ENCODE measurements at regions of chr1 and their contacts with region 1.

Region 1: GRCh38 chr1:35641233-35641866 is at the start of gene PSMB2:
- DNase-seq: peak; percentile 96
- ATAC-seq: peak; percentile 91
- H3K4me3 ChIP-seq: peak within 1 kb of the TSS; percentile 84 to 97 (median 92)
- H3K4me3 Mint-ChIP-seq: peak within 1 kb of the TSS; percentile 100
- H3K27ac ChIP-seq: peak within 1 kb of the TSS; percentile 75 to 76
- H3K27ac Mint-ChIP-seq: peak within 1 kb of the TSS; percentile 98
- H3K4me1 ChIP-seq: peaks cover 14 to 18% of the 10 kb centered on the region in 2 donors
- H3K4me1 Mint-ChIP-seq: peaks cover 39% of the 10 kb centered on the region
- H3K27me3 ChIP-seq: peaks cover 0 to 21% (median 5%) of the 10 kb centered on the region in 4 experiments
- H3K27me3 Mint-ChIP-seq: peaks cover 23% of the 10 kb centered on the region
- CTCF ChIP-seq: no peak
- total RNA-seq, gene PSMB2: 24.8 and 26.2 TPM in 2 replicates

Region 2: GRCh38 chr1:35539073-35539823 is 102.1 kb before region 1 on chr1:
- CTCF ChIA-PET with region 1: no interaction called
- POLR2A ChIA-PET with region 1: no interaction called
- intact Hi-C with region 1: no loop called
- DNase-seq: peak; percentile 15
- ATAC-seq: no peak
- H3K4me3 ChIP-seq: no peak overlapping the region
- H3K4me3 Mint-ChIP-seq: peak overlapping the region; percentile 66
- H3K27ac ChIP-seq: peak overlapping the region; percentile 35 to 66
- H3K27ac Mint-ChIP-seq: peak overlapping the region; percentile 78
- H3K4me1 ChIP-seq: peaks cover 14 to 18% of the 10 kb centered on the region in 2 donors
- H3K4me1 Mint-ChIP-seq: peaks cover 31% of the 10 kb centered on the region
- H3K27me3 ChIP-seq: no peaks in the 10 kb centered on the region
- H3K27me3 Mint-ChIP-seq: no peaks in the 10 kb centered on the region
- CTCF ChIP-seq: no peak

Region 3: DNA sequence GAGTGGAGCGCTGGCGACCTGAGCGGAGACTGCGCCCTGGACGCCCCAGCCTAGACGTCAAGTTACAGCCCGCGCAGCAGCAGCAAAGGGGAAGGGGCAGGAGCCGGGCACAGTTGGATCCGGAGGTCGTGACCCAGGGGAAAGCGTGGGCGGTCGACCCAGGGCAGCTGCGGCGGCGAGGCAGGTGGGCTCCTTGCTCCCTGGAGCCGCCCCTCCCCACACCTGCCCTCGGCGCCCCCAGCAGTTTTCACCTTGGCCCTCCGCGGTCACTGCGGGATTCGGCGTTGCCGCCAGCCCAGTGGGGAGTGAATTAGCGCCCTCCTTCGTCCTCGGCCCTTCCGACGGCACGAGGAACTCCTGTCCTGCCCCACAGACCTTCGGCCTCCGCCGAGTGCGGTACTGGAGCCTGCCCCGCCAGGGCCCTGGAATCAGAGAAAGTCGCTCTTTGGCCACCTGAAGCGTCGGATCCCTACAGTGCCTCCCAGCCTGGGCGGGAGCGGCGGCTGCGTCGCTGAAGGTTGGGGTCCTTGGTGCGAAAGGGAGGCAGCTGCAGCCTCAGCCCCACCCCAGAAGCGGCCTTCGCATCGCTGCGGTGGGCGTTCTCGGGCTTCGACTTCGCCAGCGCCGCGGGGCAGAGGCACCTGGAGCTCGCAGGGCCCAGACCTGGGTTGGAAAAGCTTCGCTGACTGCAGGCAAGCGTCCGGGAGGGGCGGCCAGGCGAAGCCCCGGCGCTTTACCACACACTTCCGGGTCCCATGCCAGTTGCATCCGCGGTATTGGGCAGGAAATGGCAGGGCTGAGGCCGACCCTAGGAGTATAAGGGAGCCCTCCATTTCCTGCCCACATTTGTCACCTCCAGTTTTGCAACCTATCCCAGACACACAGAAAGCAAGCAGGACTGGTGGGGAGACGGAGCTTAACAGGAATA is 64.0 kb before region 1 on chr1:
- CTCF ChIA-PET with region 1: interaction called, 3 read pairs
- POLR2A ChIA-PET with region 1: interaction called, 13 read pairs
- intact Hi-C with region 1: loop called (anchors 5 kb)
- DNase-seq: peak; percentile 81
- ATAC-seq: peak; percentile 85
- H3K4me3 ChIP-seq: peak overlapping the region; percentile 60 to 75 (median 71)
- H3K4me3 Mint-ChIP-seq: peak overlapping the region; percentile 91
- H3K27ac ChIP-seq: peak overlapping the region; percentile 43 to 62
- H3K27ac Mint-ChIP-seq: peak overlapping the region; percentile 90
- H3K4me1 ChIP-seq: peaks cover 21 to 39% of the 10 kb centered on the region in 2 donors
- H3K4me1 Mint-ChIP-seq: peaks cover 38% of the 10 kb centered on the region
- H3K27me3 ChIP-seq: peaks cover 0 to 21% (median 6%) of the 10 kb centered on the region in 4 experiments
- H3K27me3 Mint-ChIP-seq: peaks cover 14% of the 10 kb centered on the region
- CTCF ChIP-seq: no peak

Region 4: DNA sequence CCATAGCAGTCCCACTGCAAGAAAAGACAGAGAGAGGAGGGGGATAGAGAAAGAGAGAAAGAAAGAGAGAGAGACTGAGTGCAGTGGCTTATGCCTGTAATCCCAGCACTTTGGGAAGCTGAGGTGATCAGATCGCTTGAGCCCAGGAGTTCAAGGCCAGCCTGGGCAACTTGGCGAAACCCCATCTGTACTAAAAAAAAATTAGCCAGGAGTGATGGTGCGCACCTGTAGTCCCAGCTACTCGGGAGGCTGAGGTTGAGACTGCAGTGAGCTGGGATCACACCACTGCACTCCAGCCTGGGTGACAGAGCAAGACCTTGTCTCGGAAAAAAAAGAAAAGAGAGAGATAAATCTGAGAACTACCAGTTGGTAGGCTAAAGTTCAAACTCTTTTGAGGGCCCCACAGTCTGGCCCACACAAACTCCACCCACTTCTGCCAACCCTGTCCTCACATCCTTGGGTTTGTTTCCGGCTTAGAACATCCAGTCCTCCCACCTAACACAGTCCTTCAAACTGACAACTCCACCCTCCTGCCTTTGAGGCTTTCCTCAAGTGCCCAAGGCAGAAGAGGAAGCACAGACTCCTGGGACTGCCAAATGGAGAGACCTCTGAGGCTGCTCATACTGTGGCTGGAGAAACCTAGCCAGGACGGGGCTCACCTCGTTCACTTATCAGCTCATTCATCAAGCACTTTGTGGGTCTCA is 48.2 kb before region 1 on chr1:
- CTCF ChIA-PET with region 1: no interaction called
- POLR2A ChIA-PET with region 1: interaction called, 12 read pairs
- intact Hi-C with region 1: no loop called
- DNase-seq: no peak
- ATAC-seq: no peak
- H3K4me3 ChIP-seq: no peak overlapping the region
- H3K4me3 Mint-ChIP-seq: no peak overlapping the region
- H3K27ac ChIP-seq: no peak overlapping the region
- H3K27ac Mint-ChIP-seq: no peak overlapping the region
- H3K4me1 ChIP-seq: no peaks in the 10 kb centered on the region
- H3K4me1 Mint-ChIP-seq: no peaks in the 10 kb centered on the region
- H3K27me3 ChIP-seq: no peaks in the 10 kb centered on the region
- H3K27me3 Mint-ChIP-seq: no peaks in the 10 kb centered on the region
- CTCF ChIP-seq: no peak

Region 5: DNA sequence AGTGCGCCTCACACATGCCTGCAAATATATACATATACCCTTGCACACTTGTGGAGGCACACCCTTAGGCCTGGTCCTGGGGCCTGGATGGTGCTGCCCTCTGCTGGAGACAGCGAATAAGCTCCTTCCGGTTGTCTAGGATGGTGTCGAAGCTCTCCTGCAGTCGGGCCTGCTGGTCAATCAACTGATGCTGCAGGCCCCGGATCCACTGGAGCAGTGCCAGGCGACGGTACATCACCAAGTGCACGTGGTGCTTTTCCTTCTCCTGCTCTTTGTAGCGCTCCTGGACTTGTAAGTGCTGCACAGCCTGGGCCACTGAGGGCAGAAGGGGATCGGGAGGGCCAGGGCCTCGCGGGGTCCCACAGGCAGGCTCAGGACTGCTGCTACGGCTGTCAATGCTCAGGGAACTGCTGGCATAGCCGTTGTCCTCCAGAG is 74.2 kb after region 1 on chr1:
- CTCF ChIA-PET with region 1: interaction called, 6 read pairs
- POLR2A ChIA-PET with region 1: no interaction called
- intact Hi-C with region 1: loop called (anchors 5 kb)
- DNase-seq: peak; percentile 79
- ATAC-seq: peak; percentile 59
- H3K4me3 ChIP-seq: no peak overlapping the region
- H3K4me3 Mint-ChIP-seq: peak overlapping the region; percentile 51
- H3K27ac ChIP-seq: no peak overlapping the region
- H3K27ac Mint-ChIP-seq: peak overlapping the region; percentile 54
- H3K4me1 ChIP-seq: peaks cover 10 to 20% of the 10 kb centered on the region in 2 donors
- H3K4me1 Mint-ChIP-seq: peaks cover 29% of the 10 kb centered on the region
- H3K27me3 ChIP-seq: peaks cover 0 to 3% (median 0%) of the 10 kb centered on the region in 4 experiments
- H3K27me3 Mint-ChIP-seq: no peaks in the 10 kb centered on the region
- CTCF ChIP-seq: peak; percentile 98

Region 6: GRCh38 chr1:36397378-36398230 is 756.3 kb after region 1 on chr1 and contains the start of gene LSM10:
- CTCF ChIA-PET with region 1: no interaction called
- POLR2A ChIA-PET with region 1: no interaction called
- intact Hi-C with region 1: loop called (anchors 5 kb)
- DNase-seq: peak; percentile 93
- ATAC-seq: peak; percentile 88
- H3K4me3 ChIP-seq: peak within 1 kb of the TSS; percentile 76 to 99 (median 97)
- H3K4me3 Mint-ChIP-seq: peak within 1 kb of the TSS; percentile 92
- H3K27ac ChIP-seq: peak within 1 kb of the TSS; percentile 78 to 93
- H3K27ac Mint-ChIP-seq: peak within 1 kb of the TSS; percentile 94
- H3K4me1 ChIP-seq: peaks cover 20 to 47% of the 10 kb centered on the region in 2 donors
- H3K4me1 Mint-ChIP-seq: peaks cover 55% of the 10 kb centered on the region
- H3K27me3 ChIP-seq: no peaks in the 10 kb centered on the region
- H3K27me3 Mint-ChIP-seq: no peaks in the 10 kb centered on the region
- CTCF ChIP-seq: no peak
- total RNA-seq, gene LSM10: 70.6 and 73.5 TPM in 2 replicates